Activated CD4-positive, alpha-beta T cell treated with anti-CD3 and anti-CD28 coated beads for 36 hours (primary cell): ENCODE measurements at regions of chr4 and their contacts with region 1.

Region 1: DNA sequence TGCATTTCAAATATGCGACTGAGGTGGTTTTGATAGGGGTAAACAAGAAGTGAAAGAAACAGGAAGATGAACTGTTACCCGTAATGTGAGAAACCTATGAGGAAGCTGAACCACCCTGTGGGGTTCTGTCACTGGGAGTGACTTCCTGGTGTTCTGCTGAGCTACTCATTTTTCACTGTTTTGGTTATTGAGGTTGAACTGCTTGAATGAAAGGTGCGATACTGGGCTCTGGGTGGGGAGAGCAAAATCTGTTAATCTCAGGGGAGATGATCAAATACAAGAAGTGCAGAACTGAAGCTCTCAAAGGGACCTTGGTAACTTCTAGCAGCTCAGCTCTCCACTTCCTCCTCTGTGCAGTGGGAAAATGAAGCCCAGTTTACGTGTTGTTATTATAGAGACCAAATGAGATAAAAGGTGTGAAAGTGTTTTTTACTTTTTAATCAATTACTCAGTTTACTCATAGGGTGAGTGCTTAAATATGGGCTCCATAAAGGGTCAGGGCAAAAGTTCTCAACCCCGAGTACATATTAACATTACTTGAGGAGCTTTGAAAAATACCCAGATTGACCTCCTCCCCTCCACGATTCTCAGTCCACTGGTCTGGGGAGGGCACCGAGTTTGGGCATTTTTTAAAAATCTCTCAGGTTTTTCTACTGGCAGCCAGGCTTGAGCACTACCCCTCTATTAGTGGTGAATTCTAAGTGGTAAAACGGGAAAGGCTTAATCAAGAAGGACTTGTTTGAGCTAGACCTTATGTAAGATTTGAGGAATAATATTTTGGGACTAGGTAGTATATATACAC is 66.7 kb downstream of the COQ2 start:
- DNase-seq: peak; percentile 73
- ATAC-seq: peak; percentile 85
- H3K4me3 Mint-ChIP-seq: peak overlapping the region; percentile 20
- H3K27ac Mint-ChIP-seq: peak overlapping the region; percentile 76
- H3K4me1 Mint-ChIP-seq: peaks cover 79% of the 10 kb centered on the region
- H3K27me3 Mint-ChIP-seq: peaks cover 2% of the 10 kb centered on the region

Region 2: DNA sequence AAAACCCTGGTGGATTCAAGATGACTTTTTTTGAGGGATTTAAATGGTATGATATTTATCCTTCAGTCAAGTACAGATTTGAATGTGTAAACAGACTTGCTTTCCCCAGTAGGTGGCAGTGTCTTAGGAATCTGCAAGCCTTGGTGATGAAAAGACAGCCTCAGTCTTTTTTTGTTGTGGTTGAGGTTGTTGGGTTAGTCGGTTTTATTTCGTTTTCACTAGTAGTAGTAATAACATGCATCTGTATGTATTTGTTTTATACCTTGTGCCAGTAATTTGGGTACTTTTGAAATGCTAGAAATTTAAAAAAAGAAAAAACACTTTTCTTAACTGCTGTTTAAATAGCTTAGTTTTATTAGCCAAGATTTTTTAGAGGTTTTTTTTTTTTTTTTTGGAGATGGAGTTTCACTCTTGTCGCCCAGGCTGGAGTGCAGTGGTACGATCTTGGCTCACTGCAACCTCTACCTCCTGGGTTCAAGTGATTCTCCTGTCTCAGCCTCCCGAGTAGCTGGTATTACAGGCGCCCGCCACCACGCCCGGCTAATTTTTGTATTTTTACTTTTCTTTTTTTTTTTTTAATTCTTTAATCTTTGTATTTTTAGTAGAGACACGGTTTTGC is 143.7 kb before region 1 on chr4:
- CTCF ChIA-PET with region 1: interaction called, 4 read pairs
- POLR2A ChIA-PET with region 1: interaction called, 5 read pairs
- intact Hi-C with region 1: loop called (anchors 1 kb)
- DNase-seq: peak; percentile 63
- ATAC-seq: peak; percentile 91
- H3K4me3 Mint-ChIP-seq: peak overlapping the region; percentile 25
- H3K27ac Mint-ChIP-seq: no peak overlapping the region
- H3K4me1 Mint-ChIP-seq: peaks cover 13% of the 10 kb centered on the region
- H3K27me3 Mint-ChIP-seq: no peaks in the 10 kb centered on the region

Region 3: GRCh38 chr4:83231620-83232076 is 13.7 kb after region 1 on chr4:
- CTCF ChIA-PET with region 1: interaction called, 9 read pairs
- POLR2A ChIA-PET with region 1: interaction called, 4 read pairs
- intact Hi-C with region 1: loop called (anchors 1 kb)
- DNase-seq: peak; percentile 51
- ATAC-seq: peak; percentile 71
- H3K4me3 Mint-ChIP-seq: no peak overlapping the region
- H3K27ac Mint-ChIP-seq: peak overlapping the region; percentile 51
- H3K4me1 Mint-ChIP-seq: peaks cover 45% of the 10 kb centered on the region
- H3K27me3 Mint-ChIP-seq: peaks cover 23% of the 10 kb centered on the region

Region 4: DNA sequence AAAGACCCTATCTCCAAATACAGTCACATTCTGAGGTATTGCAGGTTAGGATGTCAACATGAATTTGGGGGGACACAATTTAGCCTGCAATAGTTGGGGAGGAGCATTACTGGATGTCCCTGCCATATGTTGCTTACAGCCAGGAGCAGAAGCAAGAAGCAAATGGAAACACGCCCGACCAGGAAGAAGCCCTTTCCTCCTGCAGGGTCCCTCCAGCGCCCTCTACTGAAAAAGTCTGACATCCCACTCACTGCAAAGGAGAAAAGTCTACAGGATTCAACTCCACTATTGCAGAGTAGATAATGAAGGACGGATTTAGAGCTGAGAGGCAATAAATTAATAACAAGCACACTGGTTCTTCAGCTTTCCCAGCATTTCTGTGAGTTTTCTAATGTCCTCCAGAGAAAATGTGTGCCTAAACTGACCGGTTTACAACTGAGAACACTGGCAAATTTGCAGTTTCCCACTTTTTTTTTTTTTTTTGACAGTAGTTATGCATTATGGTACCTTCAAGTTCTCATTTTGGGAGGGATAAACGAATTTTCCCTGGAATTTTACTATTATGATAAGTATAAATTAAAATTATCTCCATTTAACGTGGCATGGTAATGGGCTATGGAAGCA is 35.0 kb after region 1 on chr4:
- CTCF ChIA-PET with region 1: interaction called, 8 read pairs
- POLR2A ChIA-PET with region 1: interaction called, 3 read pairs
- intact Hi-C with region 1: loop called in 1 of 2 experiments (anchors 2 kb)
- DNase-seq: peak; percentile 80
- ATAC-seq: peak; percentile 91
- H3K4me3 Mint-ChIP-seq: no peak overlapping the region
- H3K27ac Mint-ChIP-seq: no peak overlapping the region
- H3K4me1 Mint-ChIP-seq: peaks cover 24% of the 10 kb centered on the region
- H3K27me3 Mint-ChIP-seq: no peaks in the 10 kb centered on the region

Region 5: GRCh38 chr4:83356899-83357661 is 139.2 kb after region 1 on chr4:
- CTCF ChIA-PET with region 1: interaction called, 3 read pairs
- POLR2A ChIA-PET with region 1: interaction called, 3 read pairs
- intact Hi-C with region 1: loop called (anchors 1 kb)
- DNase-seq: peak; percentile 52
- ATAC-seq: peak; percentile 91
- H3K4me3 Mint-ChIP-seq: no peak overlapping the region
- H3K27ac Mint-ChIP-seq: peak overlapping the region; percentile 72
- H3K4me1 Mint-ChIP-seq: peaks cover 23% of the 10 kb centered on the region
- H3K27me3 Mint-ChIP-seq: no peaks in the 10 kb centered on the region